Psoas muscle (tissue), 8 donors: ENCODE measurements at regions of chr1 and their contacts with region 1.

Region 1: DNA sequence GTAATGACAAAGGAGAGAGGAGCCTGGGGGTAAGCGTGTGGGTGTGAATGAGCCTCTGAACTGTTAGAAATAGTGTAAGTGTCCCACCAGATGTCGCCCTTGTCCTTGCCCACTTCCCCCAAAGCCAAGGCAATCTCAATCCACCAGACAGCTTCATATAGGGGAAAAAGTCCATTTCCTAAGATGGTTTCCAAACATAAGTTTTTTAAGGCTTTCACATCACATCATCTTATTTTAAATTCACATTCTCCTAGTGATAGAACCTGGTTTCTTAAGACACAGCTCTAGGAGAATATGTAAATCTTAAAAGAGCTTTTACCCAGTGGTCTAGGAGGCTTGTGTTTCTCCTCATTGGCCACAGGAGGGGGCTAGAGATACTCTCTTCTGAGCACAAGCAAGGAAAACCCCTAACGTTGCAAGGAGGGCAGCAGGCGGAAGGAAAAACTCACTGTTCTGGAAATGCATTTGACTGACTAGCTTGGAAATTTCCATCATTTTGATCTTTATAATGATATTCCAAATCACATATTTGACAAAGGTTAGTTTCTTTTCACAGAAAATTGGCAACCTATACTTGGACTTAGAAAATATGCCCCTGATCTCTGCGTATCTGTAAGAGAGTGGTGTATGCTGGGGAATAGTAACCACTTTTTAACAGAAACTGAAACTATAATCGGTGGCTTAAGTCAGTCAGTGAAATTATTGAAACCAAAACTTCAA is 51.9 kb upstream of the LPAR3 start:
- DNase-seq: peak in 1 of 2 donors; percentile 41
- ATAC-seq: peak; percentile 92 to 99 (median 96)
- H3K4me3 ChIP-seq: peak overlapping the region; percentile 64
- H3K27ac ChIP-seq: peak overlapping the region; percentile 63
- H3K4me1 ChIP-seq: no peaks in the 10 kb centered on the region
- H3K27me3 ChIP-seq: peaks cover 0 to 10% (median 0%) of the 10 kb centered on the region in 3 donors
- CTCF ChIP-seq: peak; percentile 89

Region 2: DNA sequence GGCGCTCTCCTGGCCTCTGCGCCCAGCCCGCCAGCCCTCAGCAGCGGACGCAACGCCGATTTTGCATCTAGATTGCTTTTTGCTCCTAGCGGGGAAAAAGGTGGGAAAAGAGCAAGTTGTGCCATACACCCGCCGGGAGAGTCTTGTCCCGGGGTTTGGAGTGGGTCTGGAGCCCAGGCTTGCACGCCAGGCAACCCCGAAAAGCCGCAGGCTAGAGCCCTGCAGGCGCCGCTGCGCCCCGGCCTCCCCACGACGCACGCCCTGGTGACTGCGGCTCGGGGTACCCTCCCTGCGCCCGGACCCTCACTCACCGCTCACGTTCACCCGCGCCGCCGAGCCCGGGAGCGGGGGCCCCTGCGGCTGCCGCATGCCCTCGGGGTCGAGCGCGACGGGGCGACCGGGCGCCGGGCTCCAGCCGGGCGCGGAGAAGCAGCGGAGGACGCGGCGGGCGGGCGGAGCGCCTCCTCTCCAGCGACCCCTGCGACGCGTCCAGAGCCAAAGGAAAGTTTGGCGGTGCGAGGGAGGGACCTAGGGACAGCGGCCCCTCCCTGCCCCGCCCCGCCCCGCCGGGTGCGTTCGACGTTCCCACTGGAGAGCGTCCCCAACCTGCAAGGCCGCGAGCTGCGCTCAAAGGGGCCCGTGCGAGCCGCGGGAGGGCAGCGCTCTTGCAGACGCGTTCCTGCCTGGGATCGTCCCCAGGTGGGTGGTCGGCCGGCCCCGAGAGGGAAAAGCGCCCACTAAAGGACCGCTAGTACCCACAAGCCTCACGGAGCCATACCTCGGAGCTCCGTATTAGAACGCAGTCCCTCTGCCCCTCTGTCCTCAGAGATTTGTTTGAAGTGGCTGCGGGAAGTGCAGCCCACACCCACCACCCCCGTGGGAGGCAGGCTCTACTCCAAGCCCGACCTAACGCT is 52.0 kb before region 1 on chr1 and contains the start of gene LPAR3:
- intact Hi-C with region 1: no loop called
- DNase-seq: no peak
- ATAC-seq: no peak
- H3K4me3 ChIP-seq: peak within 1 kb of the TSS; percentile 11
- H3K27ac ChIP-seq: no peak within 1 kb of the TSS
- H3K4me1 ChIP-seq: no peaks in the 10 kb centered on the region
- H3K27me3 ChIP-seq: peaks cover 6 to 45% (median 9%) of the 10 kb centered on the region in 3 donors
- CTCF ChIP-seq: no peak
- total RNA-seq, gene LPAR3: 0.20 TPM in 1 of 4 donors, not detected in the others

Region 3: DNA sequence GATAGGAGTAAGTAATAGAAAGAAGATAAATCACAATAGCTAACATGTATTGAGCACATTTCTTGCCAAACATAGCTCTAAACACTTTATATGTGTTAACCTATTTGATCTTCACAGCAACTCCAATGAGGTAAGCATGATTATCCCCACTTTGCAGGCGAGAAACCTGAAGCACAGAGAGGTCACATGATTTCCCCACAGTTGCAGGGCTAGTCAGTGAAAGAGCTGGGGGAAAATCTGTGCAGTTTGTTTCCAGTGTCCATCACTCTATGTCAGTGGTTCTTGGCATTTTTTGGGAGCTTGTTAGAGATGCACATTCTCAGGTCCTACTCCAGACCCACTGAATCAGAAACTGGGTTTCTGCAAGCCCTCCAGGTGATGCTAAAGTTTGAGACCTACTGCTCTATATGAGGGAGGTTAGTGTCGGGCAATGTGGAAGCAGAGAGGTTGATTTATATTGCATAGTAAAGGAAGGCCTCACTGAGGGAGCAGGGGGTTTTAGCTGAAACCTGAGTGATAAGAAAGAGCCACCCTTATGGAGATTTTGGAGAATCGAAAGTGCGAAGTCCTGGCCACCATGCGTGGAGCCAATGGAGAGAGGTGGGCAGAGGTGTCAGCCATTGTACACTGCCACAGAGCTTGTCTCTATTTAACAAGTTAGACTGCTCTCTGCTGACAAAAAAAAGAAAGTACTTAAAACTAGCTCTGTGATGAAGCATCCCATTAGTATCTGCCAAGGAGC is 82.5 kb after region 1 on chr1:
- intact Hi-C with region 1: loop called in 1 of 2 experiments (anchors 5 kb)
- DNase-seq: no peak
- ATAC-seq: no peak
- H3K4me3 ChIP-seq: no peak overlapping the region
- H3K27ac ChIP-seq: no peak overlapping the region
- H3K4me1 ChIP-seq: no peaks in the 10 kb centered on the region
- H3K27me3 ChIP-seq: no peaks in the 10 kb centered on the region
- CTCF ChIP-seq: no peak

Region 4: GRCh38 chr1:85091671-85092280 is 146.8 kb after region 1 on chr1:
- intact Hi-C with region 1: loop called in 1 of 2 experiments (anchors 10 kb)
- DNase-seq: no peak
- ATAC-seq: no peak
- H3K4me3 ChIP-seq: no peak overlapping the region
- H3K27ac ChIP-seq: no peak overlapping the region
- H3K4me1 ChIP-seq: no peaks in the 10 kb centered on the region
- H3K27me3 ChIP-seq: peaks cover 0 to 3% (median 0%) of the 10 kb centered on the region in 3 donors
- CTCF ChIP-seq: no peak

Region 5: DNA sequence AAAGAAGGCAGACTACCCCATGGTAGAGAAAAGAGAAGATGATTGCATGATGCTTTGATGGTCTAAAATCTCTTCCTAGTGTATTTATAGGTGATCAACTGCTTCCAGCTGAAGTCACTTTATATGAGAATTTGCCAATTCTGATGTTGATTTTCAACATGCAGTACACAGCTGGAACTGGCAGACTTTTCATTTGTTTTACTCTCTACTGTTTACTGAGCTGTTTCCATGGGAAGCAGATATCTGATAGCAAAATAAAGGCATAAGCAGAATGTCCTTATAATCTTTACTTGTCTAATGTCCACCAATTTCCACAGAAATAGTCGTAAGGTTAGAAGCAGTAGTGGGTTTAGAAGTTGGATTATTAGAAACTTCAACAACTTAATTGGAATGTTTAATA is 181.0 kb after region 1 on chr1:
- intact Hi-C with region 1: no loop called
- DNase-seq: no peak
- ATAC-seq: no peak
- H3K4me3 ChIP-seq: no peak overlapping the region
- H3K27ac ChIP-seq: no peak overlapping the region
- H3K4me1 ChIP-seq: no peaks in the 10 kb centered on the region
- H3K27me3 ChIP-seq: no peaks in the 10 kb centered on the region
- CTCF ChIP-seq: no peak

Region 6: DNA sequence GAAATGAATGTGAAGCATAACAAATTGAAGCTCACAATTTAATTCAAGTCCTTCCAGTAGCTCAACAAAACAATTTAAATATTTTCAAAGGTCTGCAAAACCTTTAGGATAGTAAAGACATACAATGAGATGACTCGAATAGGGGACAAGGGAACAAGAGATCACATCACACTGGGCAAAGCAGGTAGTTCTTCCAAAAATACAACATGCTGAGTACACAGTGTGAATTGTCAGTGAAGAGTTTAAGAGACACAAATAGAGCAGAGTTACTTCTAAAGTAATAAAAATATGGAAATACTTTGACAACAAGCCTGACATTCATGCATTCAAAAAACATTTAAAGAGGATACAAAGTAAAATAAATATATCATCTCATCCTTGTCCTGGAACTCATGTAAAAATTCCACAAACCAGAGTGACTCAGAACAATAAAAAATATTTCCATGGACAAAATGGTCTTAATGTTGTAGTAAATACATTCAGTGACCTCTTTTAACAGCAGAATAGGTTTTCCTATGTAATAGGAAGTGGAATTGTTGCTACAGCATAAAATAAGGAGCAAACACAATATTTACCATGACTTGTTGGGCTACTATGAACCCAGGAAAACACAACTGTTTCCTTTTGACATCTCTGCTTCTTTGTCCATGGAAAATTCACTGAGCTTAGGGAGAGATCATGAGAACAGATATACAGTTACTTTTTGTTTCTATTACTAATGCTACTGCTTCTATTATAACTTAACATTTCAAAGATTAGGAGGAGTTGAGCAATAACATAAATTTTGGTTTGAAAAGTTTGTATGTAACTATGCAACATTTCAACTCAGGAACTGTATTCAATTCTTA is 415.2 kb after region 1 on chr1:
- intact Hi-C with region 1: no loop called
- DNase-seq: no peak
- ATAC-seq: peak in 2 of 4 donors; percentile 63 to 74
- H3K4me3 ChIP-seq: no peak overlapping the region
- H3K27ac ChIP-seq: peak overlapping the region; percentile 11
- H3K4me1 ChIP-seq: peaks cover 20% of the 10 kb centered on the region
- H3K27me3 ChIP-seq: no peaks in the 10 kb centered on the region
- CTCF ChIP-seq: no peak